MCF 10A (cell line): ENCODE measurements at regions of chr16 and their contacts with region 1.

Region 1: DNA sequence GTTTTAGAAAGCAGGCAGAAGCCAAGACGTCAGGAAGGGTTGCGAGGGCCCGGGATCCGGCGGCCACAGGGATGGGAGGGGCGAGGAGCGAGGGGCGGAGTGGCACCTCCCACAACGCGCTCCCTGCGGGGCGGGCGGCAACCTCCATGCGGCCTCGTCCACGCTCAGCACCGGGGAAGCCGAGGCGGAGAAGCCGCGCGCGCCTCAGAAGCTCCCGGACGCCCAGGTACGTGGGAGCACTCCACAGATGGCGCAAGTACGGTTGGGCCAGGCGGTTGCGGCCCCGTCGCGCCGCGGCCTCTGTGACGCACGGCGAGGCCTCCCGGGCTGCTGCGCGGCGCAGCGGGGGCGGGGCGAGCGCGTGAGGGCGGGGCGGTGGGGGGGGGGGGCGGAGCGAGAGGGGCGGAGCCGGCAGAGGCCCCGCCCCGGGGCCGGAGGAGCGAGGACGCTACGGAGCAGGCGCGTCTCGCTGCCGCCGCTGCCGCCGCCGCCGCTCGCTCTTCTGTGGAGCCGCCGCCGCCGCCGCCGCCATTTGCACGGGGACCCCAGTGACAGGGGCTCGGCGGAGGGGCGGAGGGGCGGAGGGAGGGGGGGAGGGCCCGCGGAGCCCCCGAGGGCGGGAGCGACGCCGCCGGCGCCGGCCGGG is at the start of gene TENT4B:
- DNase-seq: peak; percentile 83
- H3K4me3 Mint-ChIP-seq: peak within 1 kb of the TSS; percentile 76
- H3K27ac Mint-ChIP-seq: peak within 1 kb of the TSS; percentile 84
- H3K4me1 Mint-ChIP-seq: peaks cover 22% of the 10 kb centered on the region
- H3K27me3 Mint-ChIP-seq: no peaks in the 10 kb centered on the region
- CTCF ChIP-seq: no peak
- total RNA-seq, gene TENT4B: 11.5 and 12.1 TPM in 2 replicates

Region 2: GRCh38 chr16:50065624-50066481 is 87.1 kb before region 1 on chr16 and contains the start of gene HEATR3:
- CTCF ChIA-PET with region 1: interaction called, 4 read pairs
- POLR2A ChIA-PET with region 1: interaction called, 6 read pairs
- intact Hi-C with region 1: loop called (anchors 1 kb)
- DNase-seq: peak; percentile 90
- H3K4me3 Mint-ChIP-seq: peak within 1 kb of the TSS; percentile 88
- H3K27ac Mint-ChIP-seq: peak within 1 kb of the TSS; percentile 52
- H3K4me1 Mint-ChIP-seq: peaks cover 23% of the 10 kb centered on the region
- H3K27me3 Mint-ChIP-seq: no peaks in the 10 kb centered on the region
- CTCF ChIP-seq: no peak
- total RNA-seq, gene HEATR3: 10.5 and 13.3 TPM in 2 replicates

Region 3: GRCh38 chr16:50166511-50167500 is 13.9 kb after region 1 on chr16:
- CTCF ChIA-PET with region 1: interaction called, 10 read pairs
- POLR2A ChIA-PET with region 1: interaction called, 8 read pairs
- intact Hi-C with region 1: no loop called
- DNase-seq: peak; percentile 23
- H3K4me3 Mint-ChIP-seq: no peak overlapping the region
- H3K27ac Mint-ChIP-seq: peak overlapping the region; percentile 82
- H3K4me1 Mint-ChIP-seq: peaks cover 5% of the 10 kb centered on the region
- H3K27me3 Mint-ChIP-seq: no peaks in the 10 kb centered on the region
- CTCF ChIP-seq: no peak